ENCODE measurements at regions of chr7 and their contacts with region 1.

Region 1: GRCh38 chr7:15833008-15833407 is 146.5 kb upstream of the MEOX2 start:
- DNase-seq: peak; percentile 66 to 79 (median 72)
- ATAC-seq: peak; percentile 23 to 69 (median 44)
- H3K4me3 ChIP-seq: no peak overlapping the region
- H3K27ac ChIP-seq: peak overlapping the region in 9 of 12 donors; percentile 5 to 53 (median 26)
- H3K4me1 ChIP-seq: peaks cover 0 to 48% (median 22%) of the 10 kb centered on the region in 12 donors
- H3K27me3 ChIP-seq: no peaks in the 10 kb centered on the region
- CTCF ChIP-seq: no peak
- POLR2A ChIP-seq: no peak

Region 2: DNA sequence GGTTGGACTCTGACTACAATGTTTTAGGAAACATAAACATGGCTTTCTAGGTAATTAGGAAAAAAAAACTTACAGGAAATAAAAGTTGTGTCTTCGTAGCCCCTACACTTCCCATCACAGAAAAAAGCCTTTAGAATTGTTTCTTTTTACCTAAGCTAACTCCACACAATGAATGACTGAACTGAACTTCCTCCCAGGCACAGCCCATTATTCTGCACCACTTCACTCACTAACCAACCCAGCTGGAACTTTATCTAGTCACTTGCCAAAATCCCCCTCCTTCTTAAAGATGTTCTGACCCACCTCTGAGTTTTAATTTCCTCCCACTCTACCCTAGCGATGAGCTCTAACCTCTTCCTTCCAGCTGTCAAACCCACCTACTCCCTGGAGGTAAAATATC is 54.8 kb before region 1 on chr7:
- intact Hi-C with region 1: loop called in 1 of 10 experiments (anchors 5 kb)
- DNase-seq: no peak
- ATAC-seq: peak in 2 of 4 donors; percentile 26 to 78
- H3K4me3 ChIP-seq: no peak overlapping the region
- H3K27ac ChIP-seq: peak overlapping the region in 7 of 12 donors; percentile 2 to 46 (median 30)
- H3K4me1 ChIP-seq: peaks cover 0 to 16% (median 7%) of the 10 kb centered on the region in 12 donors
- H3K27me3 ChIP-seq: no peaks in the 10 kb centered on the region
- CTCF ChIP-seq: no peak
- POLR2A ChIP-seq: no peak

Region 3: GRCh38 chr7:15795393-15795792 is 37.6 kb before region 1 on chr7:
- intact Hi-C with region 1: loop called in 2 of 10 experiments (anchors 5 kb)
- DNase-seq: peak in 4 of 5 donors; percentile 33 to 36 (median 34)
- ATAC-seq: peak; percentile 51 to 83 (median 76)
- H3K4me3 ChIP-seq: no peak overlapping the region
- H3K27ac ChIP-seq: peak overlapping the region in 6 of 12 donors; percentile 15 to 41 (median 34)
- H3K4me1 ChIP-seq: peaks cover 0 to 20% (median 0%) of the 10 kb centered on the region in 12 donors
- H3K27me3 ChIP-seq: no peaks in the 10 kb centered on the region
- CTCF ChIP-seq: no peak
- POLR2A ChIP-seq: no peak